ENCODE measurements at regions of chr1 and their contacts with region 1.

Region 1: GRCh38 chr1:156212833-156213643 is at the start of gene PMF1:
- DNase-seq: peak; percentile 95 to 98 (median 97)
- H3K4me3 ChIP-seq: peak within 1 kb of the TSS; percentile 41 to 94 (median 80)
- H3K27ac ChIP-seq: peak within 1 kb of the TSS; percentile 83 to 100 (median 98)
- H3K27me3 ChIP-seq: no peaks in the 10 kb centered on the region
- CTCF ChIP-seq: peak in 37 of 56 donors; percentile 9 to 62 (median 32)
- total RNA-seq, gene PMF1: 16.6 to 45.3 (median 27.0) TPM

Region 2: DNA sequence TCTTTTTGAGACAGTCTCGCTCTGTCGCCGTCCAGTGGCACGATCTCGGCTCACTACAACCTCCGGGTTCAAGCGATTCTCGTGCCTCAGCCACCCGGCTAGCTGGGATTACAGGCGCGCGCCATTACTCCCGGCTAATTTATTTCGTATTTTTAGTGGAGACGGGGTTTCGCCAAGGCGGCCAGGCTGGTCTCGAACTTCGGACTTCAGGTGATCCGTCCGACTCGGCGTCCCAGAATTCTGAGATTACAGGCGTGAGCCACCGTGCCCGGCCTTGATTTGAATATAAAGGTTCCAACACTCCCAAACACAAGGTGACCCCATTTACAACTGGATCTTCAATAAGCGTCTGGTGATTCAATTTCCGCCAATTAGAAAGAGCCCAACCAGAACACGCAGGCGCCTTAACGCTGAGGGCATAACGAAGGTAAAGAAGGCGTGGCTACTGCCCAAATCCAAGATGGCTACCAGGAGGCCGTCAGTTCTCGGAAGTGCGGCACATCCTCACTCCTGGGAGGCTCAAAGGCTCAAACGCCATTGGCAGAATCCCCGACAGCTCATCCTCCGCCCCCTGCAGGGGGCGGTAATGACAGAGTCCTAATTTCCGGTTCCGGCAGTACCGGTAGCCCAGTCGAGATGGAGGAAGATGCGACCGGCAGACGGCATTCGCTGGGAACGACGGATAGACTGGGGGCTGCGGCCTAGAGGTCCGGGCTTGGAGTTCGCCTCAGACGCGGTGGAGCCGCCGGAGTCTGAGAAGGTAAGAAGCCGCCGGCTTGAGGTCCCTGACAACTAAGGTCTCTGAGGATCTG is 19.3 kb before region 1 on chr1 and contains the start of gene SLC25A44:
- intact Hi-C with region 1: loop called (anchors 2 kb)
- DNase-seq: peak; percentile 90 to 98 (median 97)
- H3K4me3 ChIP-seq: peak within 1 kb of the TSS; percentile 69 to 100 (median 96)
- H3K27ac ChIP-seq: peak within 1 kb of the TSS in 58 of 59 donors; percentile 45 to 99 (median 87)
- H3K27me3 ChIP-seq: no peaks in the 10 kb centered on the region
- CTCF ChIP-seq: peak; percentile 41 to 92 (median 75)
- total RNA-seq, gene SLC25A44: 30.5 to 80.5 (median 49.8) TPM

Measured in dorsolateral prefrontal cortex (tissue), 120 donors.